Common myeloid progenitor, CD34-positive (primary cell): ENCODE measurements at regions of chr12 and their contacts with region 1.

Region 1: DNA sequence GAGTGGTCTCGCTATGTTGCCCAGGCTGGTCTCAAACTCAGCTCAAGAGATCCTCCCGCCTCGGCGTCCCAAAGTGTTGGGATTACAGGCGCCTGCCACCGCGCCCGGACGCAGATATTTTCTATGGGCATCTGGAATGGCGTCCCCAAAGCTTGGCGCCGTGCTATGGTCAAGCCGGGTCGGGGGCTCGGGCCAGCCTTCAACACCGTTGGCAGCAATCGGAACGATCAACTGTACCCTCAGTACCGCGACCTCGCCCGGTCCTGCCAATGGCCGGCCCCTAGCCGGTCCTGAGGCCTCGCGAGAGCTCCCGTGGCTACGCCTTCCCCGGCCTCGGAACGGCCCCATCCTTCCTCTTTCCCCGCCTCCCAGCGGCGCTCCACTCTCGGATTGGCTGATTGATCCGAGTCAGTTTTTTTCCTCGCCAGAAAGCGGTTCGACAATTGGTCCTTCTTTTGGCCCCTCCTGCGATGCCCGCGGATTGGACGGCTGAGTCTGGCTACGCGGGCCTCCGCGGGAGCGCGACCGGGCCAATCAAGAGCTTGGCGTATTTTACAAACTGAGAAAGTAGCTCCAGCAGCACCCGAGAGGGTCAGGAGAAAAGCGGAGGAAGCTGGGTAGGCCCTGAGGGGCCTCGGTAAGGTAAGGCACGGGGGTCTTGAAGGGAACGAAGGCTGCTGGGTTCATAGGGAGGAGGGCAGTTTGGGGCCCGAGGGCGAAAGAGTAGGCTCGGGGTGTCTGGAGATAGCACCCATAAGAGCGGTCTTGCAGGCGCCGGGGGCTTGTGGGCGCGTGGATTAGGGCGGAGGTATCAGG is at the start of gene TROAP:
- DNase-seq: peak; percentile 98 to 99 (median 98)
- H3K4me3 ChIP-seq: peak within 1 kb of the TSS; percentile 63 to 92 (median 83)
- H3K27ac ChIP-seq: peak within 1 kb of the TSS in 1 of 2 experiments; percentile 79
- H3K4me1 ChIP-seq: peaks cover 5 to 20% (median 17%) of the 10 kb centered on the region in 4 experiments
- H3K27me3 ChIP-seq: peaks cover 0 to 4% (median 0%) of the 10 kb centered on the region in 5 experiments

Region 2: GRCh38 chr12:49336645-49337584 is 14.0 kb after region 1 on chr12 and contains the start of gene C1QL4:
- CTCF ChIA-PET with region 1: interaction called, 46 read pairs
- POLR2A ChIA-PET with region 1: no interaction called
- DNase-seq: peak; percentile 78 to 84 (median 84)
- H3K4me3 ChIP-seq: peak within 1 kb of the TSS in 6 of 7 experiments; percentile 23 to 55 (median 41)
- H3K27ac ChIP-seq: no peak within 1 kb of the TSS
- H3K4me1 ChIP-seq: peaks cover 0 to 20% (median 10%) of the 10 kb centered on the region in 4 experiments
- H3K27me3 ChIP-seq: peaks cover 7 to 100% (median 46%) of the 10 kb centered on the region in 5 experiments

Region 3: DNA sequence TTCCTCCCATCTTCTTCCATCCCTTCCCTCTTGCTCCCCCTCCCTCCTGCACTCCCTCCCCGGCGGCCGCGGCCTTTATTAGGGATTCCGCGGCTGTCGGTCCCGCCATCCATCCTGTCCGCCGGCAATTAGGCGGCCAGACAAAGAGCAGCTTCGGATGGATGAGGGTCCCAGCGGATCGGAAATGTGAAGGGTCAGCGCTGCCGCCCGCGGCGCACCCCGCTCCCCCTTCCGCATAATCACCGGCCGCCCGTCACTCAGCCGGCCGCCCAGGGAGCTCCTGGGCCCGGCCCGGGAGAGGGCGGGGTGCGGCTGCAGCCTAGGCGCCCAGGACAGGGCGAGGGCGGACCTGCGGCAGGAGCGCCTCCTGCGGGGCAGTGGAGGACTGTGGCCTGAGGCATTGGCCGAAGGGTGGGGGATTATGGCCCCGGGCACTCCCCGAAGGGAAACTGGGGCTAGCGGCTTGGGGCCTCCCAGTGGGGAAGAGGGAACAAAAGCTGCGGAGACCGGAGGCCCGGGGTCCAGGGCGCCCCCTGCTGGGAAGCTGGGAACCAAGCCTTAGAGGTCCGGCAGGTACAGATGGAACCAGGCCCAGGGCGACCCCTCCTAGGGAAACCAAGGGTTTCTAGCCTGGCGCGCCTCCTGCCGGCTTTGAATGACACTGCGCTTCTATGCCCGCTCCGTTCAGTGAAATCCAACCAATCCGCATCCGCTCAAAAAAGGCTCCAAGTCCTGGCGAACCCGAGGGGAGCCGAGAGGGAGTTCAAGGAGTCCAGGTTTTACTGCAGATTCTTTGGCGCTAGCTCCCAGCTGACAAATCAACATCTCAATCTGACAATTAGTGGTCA is 19.4 kb after region 1 on chr12:
- CTCF ChIA-PET with region 1: interaction called, 46 read pairs
- POLR2A ChIA-PET with region 1: no interaction called
- DNase-seq: peak; percentile 84 to 90 (median 88)
- H3K4me3 ChIP-seq: peak overlapping the region; percentile 8 to 73 (median 26)
- H3K27ac ChIP-seq: no peak overlapping the region
- H3K4me1 ChIP-seq: peaks cover 0 to 55% (median 40%) of the 10 kb centered on the region in 4 experiments
- H3K27me3 ChIP-seq: peaks cover 11 to 100% (median 49%) of the 10 kb centered on the region in 5 experiments